RWPE1 (cell line): ENCODE measurements at regions of chr1 and their contacts with region 1.

Region 1: DNA sequence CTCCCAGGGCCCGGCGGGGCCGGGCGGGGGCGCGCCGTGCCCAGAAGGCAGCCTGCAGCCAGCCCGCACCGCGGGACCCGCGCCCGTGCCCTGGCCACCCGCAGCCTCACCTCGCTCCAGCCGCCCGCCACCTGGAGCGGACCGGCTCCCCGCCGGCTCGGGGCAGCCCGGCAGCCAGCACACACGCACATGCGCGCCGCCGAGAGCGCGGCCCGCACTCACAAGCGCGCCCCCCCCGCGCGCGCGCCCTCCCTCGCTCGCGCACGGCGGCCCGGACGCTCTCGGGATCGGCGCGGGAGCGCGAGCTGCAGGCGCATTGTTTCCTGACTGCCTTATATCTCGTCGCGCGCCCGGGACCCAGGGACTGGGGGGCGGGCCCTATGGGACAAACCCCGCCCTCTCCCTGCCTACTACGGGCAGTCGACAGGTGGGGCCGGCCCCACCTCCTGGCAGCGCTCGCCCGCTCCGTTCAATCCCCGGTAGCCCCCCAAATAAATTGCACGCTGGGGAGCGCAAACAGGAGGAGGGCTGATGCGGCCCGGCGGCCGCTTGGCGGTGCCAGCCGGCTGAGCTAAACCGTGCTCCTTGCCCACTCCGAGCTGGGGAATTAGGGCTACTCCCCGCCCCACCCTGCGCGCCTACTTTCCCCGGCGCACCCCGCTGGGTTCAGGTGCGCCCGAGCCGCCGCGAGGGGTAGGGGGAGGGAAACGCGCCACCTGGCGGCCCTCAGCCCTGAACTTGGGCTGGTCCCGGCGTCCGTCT is at the start of gene MYCL:
- DNase-seq: peak; percentile 87
- H3K27ac ChIP-seq: peak within 1 kb of the TSS; percentile 80
- CTCF ChIP-seq: peak; percentile 84

Region 2: GRCh38 chr1:39816415-39817090 is 85.3 kb before region 1 on chr1:
- CTCF ChIA-PET with region 1: interaction called, 32 read pairs
- POLR2A ChIA-PET with region 1: no interaction called
- DNase-seq: peak; percentile 60
- H3K27ac ChIP-seq: no peak overlapping the region
- CTCF ChIP-seq: peak; percentile 88

Region 3: GRCh38 chr1:39852214-39852791 is 49.6 kb before region 1 on chr1:
- CTCF ChIA-PET with region 1: interaction called, 11 read pairs
- POLR2A ChIA-PET with region 1: no interaction called
- DNase-seq: peak; percentile 23
- H3K27ac ChIP-seq: peak overlapping the region; percentile 66
- CTCF ChIP-seq: no peak